Aorta (tissue), 5 donors: ENCODE measurements at regions of chrX and their contacts with region 1.

Region 1: DNA sequence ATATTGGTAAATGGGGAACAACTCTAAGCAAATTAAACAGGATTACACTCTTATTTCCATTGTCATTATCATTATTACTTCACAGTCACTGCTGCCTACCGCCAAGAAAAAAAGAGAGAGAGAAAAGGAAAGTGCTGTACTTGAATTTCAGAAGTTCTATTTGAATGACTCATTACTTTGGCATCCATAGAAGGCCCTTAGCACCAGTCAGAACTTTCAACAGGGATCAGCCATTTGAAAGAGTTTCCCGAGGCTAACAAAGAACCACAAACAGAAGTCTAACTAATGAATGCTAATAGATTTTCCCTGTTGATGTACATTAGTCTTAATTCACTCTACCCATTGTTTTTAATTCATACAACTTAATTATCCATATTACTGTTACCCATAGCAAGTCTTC is 116.3 kb downstream of the SHROOM4 start:
- DNase-seq: no peak
- ATAC-seq: peak; percentile 57
- H3K4me3 ChIP-seq: no peak overlapping the region
- H3K27ac ChIP-seq: no peak overlapping the region
- H3K4me1 ChIP-seq: peaks cover 1 to 2% of the 10 kb centered on the region in 2 donors
- H3K27me3 ChIP-seq: no peaks in the 10 kb centered on the region

Region 2: GRCh38 chrX:50812995-50813826 is 115.5 kb after region 1 on chrX:
- intact Hi-C with region 1: loop called in 1 of 2 experiments (anchors 5 kb)
- DNase-seq: peak; percentile 57 to 82
- ATAC-seq: peak; percentile 63
- H3K4me3 ChIP-seq: peak overlapping the region; percentile 34 to 79
- H3K27ac ChIP-seq: peak overlapping the region in 1 of 2 donors; percentile 0
- H3K4me1 ChIP-seq: no peaks in the 10 kb centered on the region
- H3K27me3 ChIP-seq: no peaks in the 10 kb centered on the region

Region 3: DNA sequence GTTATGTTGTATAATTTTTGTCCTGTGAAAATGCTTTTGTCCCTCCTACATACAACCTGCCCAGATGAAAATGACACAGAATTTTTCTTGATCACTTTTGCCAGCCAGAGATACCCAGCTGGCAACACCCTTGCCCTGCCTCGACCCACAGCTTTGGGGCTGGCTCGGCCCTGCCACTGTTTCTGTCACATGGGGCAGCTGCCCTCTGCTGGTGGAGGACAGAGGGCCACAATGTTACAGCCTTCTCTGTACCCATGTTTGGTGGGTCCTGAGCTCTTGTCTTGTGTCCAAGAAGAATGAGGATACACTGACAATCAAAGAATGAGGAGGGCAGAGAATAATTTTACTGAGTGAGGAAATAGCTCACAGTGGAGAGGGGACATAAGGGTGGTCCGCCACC is 243.9 kb after region 1 on chrX:
- intact Hi-C with region 1: no loop called
- DNase-seq: no peak
- ATAC-seq: no peak
- H3K4me3 ChIP-seq: no peak overlapping the region
- H3K27ac ChIP-seq: no peak overlapping the region
- H3K4me1 ChIP-seq: no peaks in the 10 kb centered on the region
- H3K27me3 ChIP-seq: no peaks in the 10 kb centered on the region